Panc1 (cell line): ENCODE measurements at regions of chr14 and their contacts with region 1.

Region 1: DNA sequence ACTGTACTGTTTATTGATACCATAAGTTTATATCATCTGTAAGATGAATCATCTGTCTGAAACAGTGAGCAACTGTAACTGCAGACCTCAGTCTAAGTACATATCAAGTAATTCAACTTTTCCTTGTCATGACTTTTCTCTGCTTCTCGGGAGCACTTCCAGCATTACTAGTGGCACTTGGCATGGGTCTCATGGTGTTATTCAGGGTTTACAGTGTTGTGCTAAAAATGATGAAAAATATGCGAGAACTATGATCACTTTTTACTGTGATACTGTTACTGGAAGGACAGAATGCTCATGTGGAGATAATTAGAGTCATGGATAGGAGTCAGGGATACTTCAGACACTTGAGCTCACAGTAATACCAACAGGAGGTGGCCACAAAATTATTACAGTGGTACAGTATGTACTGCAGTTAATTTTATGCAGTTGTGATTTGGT is 8.3 kb downstream of the KTN1 start:
- DNase-seq: no peak
- ATAC-seq: peak; percentile 32; the same call in 1 of the 2 replicates
- H3K4me3 ChIP-seq: no peak overlapping the region
- H3K27ac ChIP-seq: peak overlapping the region; percentile 85
- H3K4me1 ChIP-seq: peaks cover 86% of the 10 kb centered on the region
- H3K27me3 ChIP-seq: no peaks in the 10 kb centered on the region
- CTCF ChIP-seq: no peak

Region 2: GRCh38 chr14:55446218-55446654 is 142.0 kb before region 1 on chr14:
- CTCF ChIA-PET with region 1: interaction called, 3 read pairs
- POLR2A ChIA-PET with region 1: no interaction called
- in situ Hi-C with region 1: no loop called
- intact Hi-C with region 1: loop called (anchors 5 kb)
- DNase-seq: no peak
- ATAC-seq: peak; percentile 37; the same call in 1 of the 2 replicates
- H3K4me3 ChIP-seq: no peak overlapping the region; a peak in 1 of 4 replicates
- H3K27ac ChIP-seq: peak overlapping the region; percentile 99
- H3K4me1 ChIP-seq: peaks cover 53% of the 10 kb centered on the region
- H3K27me3 ChIP-seq: no peaks in the 10 kb centered on the region
- CTCF ChIP-seq: peak; percentile 75

Region 3: GRCh38 chr14:55789430-55789829 is 201.2 kb after region 1 on chr14:
- CTCF ChIA-PET with region 1: no interaction called
- POLR2A ChIA-PET with region 1: no interaction called
- in situ Hi-C with region 1: no loop called
- intact Hi-C with region 1: no loop called
- DNase-seq: no peak
- ATAC-seq: no peak
- H3K4me3 ChIP-seq: no peak overlapping the region
- H3K27ac ChIP-seq: no peak overlapping the region
- H3K4me1 ChIP-seq: no peaks in the 10 kb centered on the region; the same call in 1 of the 2 replicates
- H3K27me3 ChIP-seq: no peaks in the 10 kb centered on the region
- CTCF ChIP-seq: no peak